Calu3 (cell line): ENCODE measurements at regions of chr12 and their contacts with region 1.

Region 1: GRCh38 chr12:59067083-59067482 is 146.8 kb upstream of the LRIG3 start:
- DNase-seq: peak; percentile 74
- H3K4me3 Mint-ChIP-seq: peak overlapping the region; percentile 33
- H3K27ac Mint-ChIP-seq: peak overlapping the region; percentile 91
- H3K4me1 Mint-ChIP-seq: peaks cover 59% of the 10 kb centered on the region
- H3K27me3 Mint-ChIP-seq: no peaks in the 10 kb centered on the region
- CTCF ChIP-seq: no peak

Region 2: DNA sequence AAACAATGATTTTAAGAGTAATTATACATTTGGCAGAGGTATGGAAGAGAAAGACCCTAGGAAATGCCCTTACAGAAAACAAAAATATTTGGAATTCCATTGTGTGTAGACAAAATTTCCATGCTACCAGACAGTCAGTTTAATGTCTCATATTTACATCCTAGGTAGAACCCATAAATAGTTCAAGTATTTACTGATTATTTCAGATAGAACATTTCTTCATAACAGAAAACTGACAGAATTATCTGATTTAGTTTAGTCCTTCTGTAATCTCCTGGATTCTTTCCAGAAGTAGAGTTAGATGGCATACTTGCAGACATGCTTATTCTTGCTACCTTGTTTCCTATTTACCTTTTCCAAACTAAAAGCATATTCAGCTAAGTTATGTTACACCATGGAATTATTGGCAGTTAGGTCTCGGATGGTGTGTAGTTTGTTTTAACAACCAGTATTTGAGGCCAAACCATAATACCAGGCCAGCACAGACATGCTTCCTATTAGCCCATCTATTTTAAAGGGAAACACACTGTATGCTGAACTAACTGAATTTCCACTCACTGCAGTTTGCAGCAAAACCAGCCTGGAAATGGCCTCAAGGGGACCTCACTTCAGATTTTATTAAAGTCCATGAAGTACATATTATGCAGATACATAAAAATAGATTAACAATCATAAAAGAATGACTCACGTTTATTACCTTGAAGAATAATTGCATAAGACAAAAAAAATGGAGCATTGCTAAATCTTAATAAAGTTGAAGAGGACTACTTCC is 20.1 kb before region 1 on chr12:
- CTCF ChIA-PET with region 1: interaction called, 61 read pairs
- intact Hi-C with region 1: loop called (anchors 1 kb)
- DNase-seq: no peak
- H3K4me3 Mint-ChIP-seq: peak overlapping the region; percentile 66
- H3K27ac Mint-ChIP-seq: peak overlapping the region; percentile 97
- H3K4me1 Mint-ChIP-seq: peaks cover 44% of the 10 kb centered on the region
- H3K27me3 Mint-ChIP-seq: no peaks in the 10 kb centered on the region
- CTCF ChIP-seq: no peak

Region 3: GRCh38 chr12:59055204-59055839 is 11.8 kb before region 1 on chr12:
- CTCF ChIA-PET with region 1: interaction called, 61 read pairs
- intact Hi-C with region 1: loop called (anchors 1 kb)
- DNase-seq: no peak
- H3K4me3 Mint-ChIP-seq: peak overlapping the region; percentile 52
- H3K27ac Mint-ChIP-seq: peak overlapping the region; percentile 97
- H3K4me1 Mint-ChIP-seq: peaks cover 69% of the 10 kb centered on the region
- H3K27me3 Mint-ChIP-seq: no peaks in the 10 kb centered on the region
- CTCF ChIP-seq: no peak

Region 4: GRCh38 chr12:59077575-59078426 is 10.7 kb after region 1 on chr12:
- CTCF ChIA-PET with region 1: interaction called, 16 read pairs
- intact Hi-C with region 1: no loop called
- DNase-seq: no peak
- H3K4me3 Mint-ChIP-seq: peak overlapping the region; percentile 58
- H3K27ac Mint-ChIP-seq: peak overlapping the region; percentile 91
- H3K4me1 Mint-ChIP-seq: peaks cover 85% of the 10 kb centered on the region
- H3K27me3 Mint-ChIP-seq: no peaks in the 10 kb centered on the region
- CTCF ChIP-seq: no peak

Region 5: GRCh38 chr12:59087077-59087673 is 20.1 kb after region 1 on chr12:
- CTCF ChIA-PET with region 1: interaction called, 10 read pairs
- intact Hi-C with region 1: no loop called
- DNase-seq: no peak
- H3K4me3 Mint-ChIP-seq: no peak overlapping the region
- H3K27ac Mint-ChIP-seq: no peak overlapping the region
- H3K4me1 Mint-ChIP-seq: peaks cover 60% of the 10 kb centered on the region
- H3K27me3 Mint-ChIP-seq: no peaks in the 10 kb centered on the region
- CTCF ChIP-seq: peak; percentile 47